ENCODE measurements at regions of chr6 and their contacts with region 1.

Region 1: DNA sequence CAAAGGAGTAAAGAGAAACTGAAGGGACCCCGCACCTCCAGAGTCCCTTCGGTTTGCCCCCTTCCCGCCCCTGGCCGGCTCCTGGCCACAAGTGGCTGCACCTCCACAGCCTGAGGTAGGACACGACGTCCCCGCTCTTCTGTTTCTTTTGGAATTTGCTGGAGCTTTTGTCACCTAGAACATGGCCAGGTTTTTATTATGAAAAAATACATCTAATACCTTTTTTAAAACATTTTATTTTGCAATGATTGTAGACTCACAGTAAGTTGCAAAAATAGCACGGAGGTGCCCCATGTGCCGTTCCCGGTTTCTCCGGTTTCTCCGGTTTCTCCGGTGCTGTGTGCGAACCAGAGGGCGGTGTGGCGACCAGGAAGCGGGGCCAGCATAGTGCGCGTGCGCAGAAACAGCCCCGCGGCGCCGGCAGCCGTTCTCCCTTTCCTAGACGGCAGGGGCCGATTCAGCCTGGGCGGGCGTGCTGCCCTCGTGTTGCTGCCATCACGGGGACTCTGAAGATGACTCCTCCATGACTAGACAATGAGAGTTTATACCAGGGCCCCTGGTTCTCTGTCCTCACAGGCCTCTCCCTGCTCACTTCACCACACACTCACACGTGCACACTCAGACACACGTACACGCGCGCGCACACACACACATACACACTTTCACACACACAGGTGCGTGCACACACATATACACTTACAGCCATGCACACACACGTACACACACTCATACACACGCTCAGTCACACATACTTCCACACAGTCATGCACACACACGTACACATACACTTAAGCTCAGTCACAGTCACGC is 102.1 kb downstream of the TMEM242 start:
- DNase-seq: peak; percentile 88 to 94 (median 91)
- H3K4me3 ChIP-seq: peak overlapping the region in 2 of 3 donors; percentile 54 to 61
- H3K27ac ChIP-seq: no peak overlapping the region
- H3K4me1 ChIP-seq: peaks cover 0 to 8% (median 0%) of the 10 kb centered on the region in 3 donors
- H3K27me3 ChIP-seq: no peaks in the 10 kb centered on the region
- CTCF ChIP-seq: peak; percentile 10

Region 2: GRCh38 chr6:157274471-157275226 is 53.4 kb after region 1 on chr6:
- intact Hi-C with region 1: loop called (anchors 10 kb)
- DNase-seq: peak; percentile 77 to 95 (median 87)
- H3K4me3 ChIP-seq: peak overlapping the region; percentile 9 to 64 (median 42)
- H3K27ac ChIP-seq: peak overlapping the region in 1 of 2 donors; percentile 72
- H3K4me1 ChIP-seq: peaks cover 0 to 2% (median 2%) of the 10 kb centered on the region in 3 donors
- H3K27me3 ChIP-seq: no peaks in the 10 kb centered on the region
- CTCF ChIP-seq: peak; percentile 89

Region 3: GRCh38 chr6:157298216-157298724 is 77.1 kb after region 1 on chr6:
- intact Hi-C with region 1: no loop called
- DNase-seq: no peak
- H3K4me3 ChIP-seq: no peak overlapping the region
- H3K27ac ChIP-seq: no peak overlapping the region
- H3K4me1 ChIP-seq: peaks cover 0 to 7% (median 0%) of the 10 kb centered on the region in 3 donors
- H3K27me3 ChIP-seq: no peaks in the 10 kb centered on the region
- CTCF ChIP-seq: no peak

Measured in kidney (tissue), 22 donors.